A549 (cell line): ENCODE measurements at regions of chr3 and their contacts with region 1.

Region 1: GRCh38 chr3:146160964-146161662 is at the start of gene PLOD2:
- DNase-seq: peak; percentile 56 to 89
- ATAC-seq: peak; percentile 75 to 76
- H3K4me3 ChIP-seq: peak within 1 kb of the TSS; percentile 90
- H3K27ac ChIP-seq: peak within 1 kb of the TSS; percentile 87 to 97
- H3K4me1 ChIP-seq: peaks cover 64% of the 10 kb centered on the region
- CTCF ChIP-seq: no peak; the same call in 2 of the 3 replicates
- EP300 ChIP-seq: peak in 1 of 2 experiments; percentile 20; a peak in 1 of 5 replicates
- POLR2A ChIP-seq: peak; percentile 86
- RAD21 ChIP-seq: no peak; a peak in 2 of 5 replicates
- polyA plus RNA-seq, gene PLOD2: 161 and 174 TPM in 2 replicates

Region 2: GRCh38 chr3:145383416-145383815 is 777.7 kb before region 1 on chr3:
- CTCF ChIA-PET with region 1: no interaction called
- POLR2A ChIA-PET with region 1: no interaction called
- DNase-seq: no peak
- ATAC-seq: no peak
- H3K4me3 ChIP-seq: no peak overlapping the region
- H3K27ac ChIP-seq: no peak overlapping the region
- H3K4me1 ChIP-seq: no peaks in the 10 kb centered on the region
- CTCF ChIP-seq: no peak
- EP300 ChIP-seq: no peak
- POLR2A ChIP-seq: no peak
- RAD21 ChIP-seq: no peak

Region 3: GRCh38 chr3:146117406-146118285 is 43.5 kb before region 1 on chr3:
- CTCF ChIA-PET with region 1: no interaction called
- POLR2A ChIA-PET with region 1: interaction called, 11 read pairs
- DNase-seq: peak in 1 of 2 experiments; percentile 22
- ATAC-seq: peak in 1 of 2 experiments; percentile 53; a peak in 3 of 6 replicates
- H3K4me3 ChIP-seq: no peak overlapping the region
- H3K27ac ChIP-seq: 0 out of 6 replicates have a peak overlapping the region, but pooled peaks of 1 of the 2 experiments have one; percentile 1
- H3K4me1 ChIP-seq: peaks cover 31% of the 10 kb centered on the region
- CTCF ChIP-seq: no peak
- EP300 ChIP-seq: no peak
- POLR2A ChIP-seq: no peak
- RAD21 ChIP-seq: no peak

Region 4: DNA sequence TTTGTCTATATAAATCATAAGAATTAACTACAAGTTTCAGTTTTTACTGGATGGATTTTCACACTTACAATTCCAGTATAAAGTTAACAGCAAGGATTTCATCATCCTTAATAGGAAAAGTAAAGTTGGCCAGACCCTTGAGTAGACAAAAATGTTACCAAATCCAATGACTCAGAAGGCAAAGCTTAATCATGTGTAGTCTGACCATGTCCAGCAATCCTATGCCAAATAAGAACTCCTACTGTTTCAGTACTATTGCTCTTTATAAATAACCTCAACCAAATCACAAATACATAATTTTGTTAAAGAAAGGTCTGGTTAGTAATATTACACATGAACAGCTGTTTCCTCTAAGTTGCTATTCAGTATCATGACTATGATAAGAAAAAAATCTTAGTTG is 35.2 kb before region 1 on chr3:
- CTCF ChIA-PET with region 1: interaction called, 3 read pairs
- POLR2A ChIA-PET with region 1: interaction called, 16 read pairs
- DNase-seq: peak; percentile 43 to 75
- ATAC-seq: peak; percentile 79 to 86
- H3K4me3 ChIP-seq: peak overlapping the region; percentile 11; the same call in 1 of the 3 replicates
- H3K27ac ChIP-seq: peak overlapping the region; percentile 23 to 75; a peak in 4 of 6 replicates
- H3K4me1 ChIP-seq: peaks cover 78% of the 10 kb centered on the region
- CTCF ChIP-seq: no peak
- EP300 ChIP-seq: peak; percentile 59 to 76; a peak in 2 of 5 replicates
- POLR2A ChIP-seq: no peak
- RAD21 ChIP-seq: no peak

Region 5: GRCh38 chr3:146148468-146148931 is 12.6 kb before region 1 on chr3:
- CTCF ChIA-PET with region 1: interaction called, 19 read pairs
- POLR2A ChIA-PET with region 1: interaction called, 5 read pairs
- DNase-seq: no peak
- ATAC-seq: peak; percentile 58 to 61; a peak in 4 of 6 replicates
- H3K4me3 ChIP-seq: no peak overlapping the region
- H3K27ac ChIP-seq: peak overlapping the region; percentile 45 to 59
- H3K4me1 ChIP-seq: peaks cover 96% of the 10 kb centered on the region
- CTCF ChIP-seq: peak; percentile 52
- EP300 ChIP-seq: no peak
- POLR2A ChIP-seq: no peak
- RAD21 ChIP-seq: peak; percentile 41 to 52; a peak in 4 of 5 replicates

Region 6: DNA sequence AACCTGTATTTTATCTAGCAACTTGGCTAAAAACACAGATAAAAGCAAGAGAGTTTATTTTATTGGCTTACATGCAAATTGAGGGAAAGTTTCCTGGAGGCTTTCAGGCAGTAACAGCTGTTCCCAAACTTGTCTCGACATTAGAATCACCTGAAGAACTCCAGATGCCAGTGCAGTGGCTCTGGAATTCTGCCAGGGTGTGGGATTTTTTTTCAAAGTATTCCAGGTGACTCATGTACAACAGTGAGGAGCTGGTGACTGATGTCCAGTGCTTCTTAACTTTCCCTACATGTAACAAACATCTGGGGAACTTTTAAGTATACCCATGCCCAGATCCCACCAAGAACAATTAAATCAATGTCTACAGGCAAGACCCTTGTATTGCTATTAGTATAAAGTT is 23.5 kb after region 1 on chr3:
- CTCF ChIA-PET with region 1: interaction called, 21 read pairs
- POLR2A ChIA-PET with region 1: interaction called, 18 read pairs
- DNase-seq: peak in 1 of 2 experiments; percentile 44
- ATAC-seq: peak in 1 of 2 experiments; percentile 41; a peak in 2 of 6 replicates
- H3K4me3 ChIP-seq: no peak overlapping the region
- H3K27ac ChIP-seq: peak overlapping the region in 1 of 2 experiments; percentile 33; a peak in 2 of 6 replicates
- H3K4me1 ChIP-seq: peaks cover 40% of the 10 kb centered on the region
- CTCF ChIP-seq: no peak
- EP300 ChIP-seq: no peak
- POLR2A ChIP-seq: no peak
- RAD21 ChIP-seq: no peak